Psoas muscle (tissue), 8 donors: ENCODE measurements at regions of chr5 and their contacts with region 1.

Region 1: DNA sequence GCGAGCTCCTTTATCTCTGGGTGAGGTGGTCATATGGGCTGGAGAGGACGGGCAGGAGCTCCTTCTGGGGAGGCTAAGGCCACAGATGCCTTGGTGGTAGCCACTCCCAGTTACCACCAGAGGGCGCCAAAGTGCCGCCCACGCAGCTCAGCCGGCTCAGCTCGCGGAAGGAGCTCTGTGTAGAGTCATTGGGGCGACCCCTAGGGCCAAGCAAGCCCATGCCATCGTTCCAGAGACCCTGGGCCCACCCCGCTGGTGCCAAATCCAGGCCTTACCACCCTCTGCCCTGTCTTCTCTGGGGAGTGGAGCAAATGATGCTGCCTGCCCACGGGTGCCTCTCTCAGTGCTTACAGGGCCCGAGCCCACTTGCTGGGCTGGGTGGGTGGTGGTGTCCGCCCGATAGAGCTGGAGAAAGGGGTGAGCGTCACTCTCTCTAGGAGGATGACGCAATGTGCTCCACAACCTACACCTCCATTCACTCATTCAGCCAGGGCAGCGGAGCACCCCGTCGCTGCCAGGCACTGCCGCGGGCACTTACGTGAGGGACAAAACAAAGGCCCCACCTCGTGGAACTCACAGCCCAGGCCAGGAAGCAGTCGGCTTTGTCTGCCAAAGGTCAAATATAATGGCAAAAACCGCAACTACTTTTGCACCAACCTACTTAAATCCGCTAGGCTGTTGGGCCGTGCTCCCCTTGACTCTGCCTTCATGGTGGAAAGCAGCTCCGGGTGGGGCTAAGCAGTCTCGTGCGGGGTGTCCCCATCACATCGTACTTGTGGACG is 13.8 kb downstream of the TSPAN17 start:
- DNase-seq: peak; percentile 70 to 86
- ATAC-seq: peak; percentile 81 to 90 (median 84)
- H3K4me3 ChIP-seq: no peak overlapping the region
- H3K27ac ChIP-seq: no peak overlapping the region
- H3K4me1 ChIP-seq: peaks cover 7% of the 10 kb centered on the region
- H3K27me3 ChIP-seq: peaks cover 0 to 29% (median 0%) of the 10 kb centered on the region in 3 donors
- CTCF ChIP-seq: peak; percentile 97

Region 2: DNA sequence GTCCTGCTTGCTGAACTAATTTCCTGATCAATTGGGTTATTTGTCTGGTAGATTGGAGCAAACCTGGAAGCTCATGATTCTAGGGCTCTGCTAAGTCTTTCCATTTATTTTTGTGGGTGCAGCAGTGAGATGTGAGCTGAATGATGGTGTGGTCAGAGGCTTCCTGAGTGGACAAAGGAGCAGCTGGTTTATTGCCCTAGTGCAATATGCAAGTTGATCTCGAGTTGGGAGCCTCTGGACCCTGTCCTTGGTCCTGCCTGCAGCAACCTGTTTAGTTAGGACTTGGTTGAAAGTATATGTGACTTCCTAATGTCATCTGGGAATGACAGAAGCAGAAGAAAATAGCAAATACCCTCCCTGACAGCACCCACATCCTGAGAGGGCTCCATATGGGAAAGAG is 145.1 kb after region 1 on chr5:
- intact Hi-C with region 1: loop called in 1 of 2 experiments (anchors 5 kb)
- DNase-seq: no peak
- ATAC-seq: no peak
- H3K4me3 ChIP-seq: no peak overlapping the region
- H3K27ac ChIP-seq: no peak overlapping the region
- H3K4me1 ChIP-seq: peaks cover 10% of the 10 kb centered on the region
- H3K27me3 ChIP-seq: peaks cover 0 to 53% (median 18%) of the 10 kb centered on the region in 3 donors
- CTCF ChIP-seq: no peak

Region 3: DNA sequence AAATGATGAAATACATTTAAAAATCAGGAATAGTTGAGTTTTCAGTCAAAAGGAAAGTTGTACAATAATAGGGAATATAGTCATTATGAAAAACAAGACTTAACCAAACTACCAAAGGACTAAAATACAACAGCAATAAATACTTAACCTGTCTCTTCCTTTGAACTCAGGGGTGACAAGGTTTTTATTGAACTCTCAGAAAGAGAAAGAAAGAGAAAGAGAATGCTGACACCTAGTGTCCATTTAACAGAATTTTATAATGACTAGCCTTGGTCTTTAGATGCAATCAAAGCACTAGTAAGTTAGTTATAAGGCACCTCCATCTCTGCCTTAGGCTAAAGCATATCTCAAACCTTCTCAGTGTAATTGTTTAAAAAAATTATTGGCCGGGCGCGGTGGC is 298.0 kb after region 1 on chr5:
- intact Hi-C with region 1: loop called in 1 of 2 experiments (anchors 2 kb)
- DNase-seq: no peak
- ATAC-seq: peak in 2 of 4 donors; percentile 52 to 62
- H3K4me3 ChIP-seq: no peak overlapping the region
- H3K27ac ChIP-seq: no peak overlapping the region
- H3K4me1 ChIP-seq: no peaks in the 10 kb centered on the region
- H3K27me3 ChIP-seq: no peaks in the 10 kb centered on the region
- CTCF ChIP-seq: peak; percentile 44